MCF 10A (cell line): ENCODE measurements at regions of chr19 and their contacts with region 1.

Region 1: GRCh38 chr19:38658462-38659306 is 11.2 kb downstream of the ACTN4 start:
- DNase-seq: peak; percentile 99
- H3K4me3 Mint-ChIP-seq: peak overlapping the region; percentile 61
- H3K27ac Mint-ChIP-seq: peak overlapping the region; percentile 100
- H3K4me1 Mint-ChIP-seq: peaks cover 46% of the 10 kb centered on the region
- H3K27me3 Mint-ChIP-seq: no peaks in the 10 kb centered on the region
- CTCF ChIP-seq: no peak

Region 2: GRCh38 chr19:38640368-38640767 is 18.3 kb before region 1 on chr19:
- CTCF ChIA-PET with region 1: interaction called, 4 read pairs
- POLR2A ChIA-PET with region 1: interaction called, 11 read pairs
- intact Hi-C with region 1: no loop called
- DNase-seq: peak; percentile 31
- H3K4me3 Mint-ChIP-seq: no peak overlapping the region
- H3K27ac Mint-ChIP-seq: no peak overlapping the region
- H3K4me1 Mint-ChIP-seq: peaks cover 16% of the 10 kb centered on the region
- H3K27me3 Mint-ChIP-seq: no peaks in the 10 kb centered on the region
- CTCF ChIP-seq: no peak

Region 3: DNA sequence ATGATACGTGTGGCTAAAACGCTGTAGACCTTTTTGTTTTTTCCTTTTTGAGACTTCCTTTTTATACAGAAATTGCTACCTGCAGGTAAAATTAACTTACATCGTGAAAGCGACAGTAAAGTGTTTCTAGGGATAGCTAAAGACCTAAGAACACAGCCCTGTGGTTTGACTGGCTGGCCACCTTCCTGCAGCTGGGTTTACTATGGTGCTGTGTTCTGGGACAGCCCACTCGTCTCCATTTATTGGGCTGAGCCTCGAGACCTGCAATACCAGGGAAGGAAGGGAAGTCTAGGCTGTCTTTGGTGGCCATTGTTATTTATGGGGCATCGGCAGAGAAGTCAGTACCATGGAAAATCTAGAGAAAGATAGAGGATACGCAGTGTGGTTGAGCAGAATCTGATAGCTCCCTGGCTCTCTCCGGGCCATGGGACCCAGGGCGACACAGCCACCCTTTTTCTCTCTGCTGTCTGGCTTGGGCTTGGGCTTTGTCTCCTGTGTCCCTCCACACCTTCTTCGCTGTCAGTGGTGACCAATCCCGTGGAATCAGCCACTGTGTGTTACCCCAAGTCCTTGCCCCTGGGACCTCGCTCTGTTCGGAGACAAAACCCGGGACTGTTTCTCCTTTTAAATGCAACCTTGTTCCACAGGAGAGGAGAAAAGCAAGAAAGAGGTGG is 19.7 kb after region 1 on chr19:
- CTCF ChIA-PET with region 1: interaction called, 9 read pairs
- POLR2A ChIA-PET with region 1: interaction called, 521 read pairs
- intact Hi-C with region 1: no loop called
- DNase-seq: no peak
- H3K4me3 Mint-ChIP-seq: no peak overlapping the region
- H3K27ac Mint-ChIP-seq: peak overlapping the region; percentile 60
- H3K4me1 Mint-ChIP-seq: peaks cover 57% of the 10 kb centered on the region
- H3K27me3 Mint-ChIP-seq: no peaks in the 10 kb centered on the region
- CTCF ChIP-seq: no peak

Region 4: GRCh38 chr19:38683393-38684080 is 24.9 kb after region 1 on chr19:
- CTCF ChIA-PET with region 1: interaction called, 17 read pairs
- POLR2A ChIA-PET with region 1: interaction called, 521 read pairs
- intact Hi-C with region 1: loop called (anchors 1 kb)
- DNase-seq: peak; percentile 99
- H3K4me3 Mint-ChIP-seq: peak overlapping the region; percentile 48
- H3K27ac Mint-ChIP-seq: peak overlapping the region; percentile 98
- H3K4me1 Mint-ChIP-seq: peaks cover 68% of the 10 kb centered on the region
- H3K27me3 Mint-ChIP-seq: no peaks in the 10 kb centered on the region
- CTCF ChIP-seq: no peak

Region 5: DNA sequence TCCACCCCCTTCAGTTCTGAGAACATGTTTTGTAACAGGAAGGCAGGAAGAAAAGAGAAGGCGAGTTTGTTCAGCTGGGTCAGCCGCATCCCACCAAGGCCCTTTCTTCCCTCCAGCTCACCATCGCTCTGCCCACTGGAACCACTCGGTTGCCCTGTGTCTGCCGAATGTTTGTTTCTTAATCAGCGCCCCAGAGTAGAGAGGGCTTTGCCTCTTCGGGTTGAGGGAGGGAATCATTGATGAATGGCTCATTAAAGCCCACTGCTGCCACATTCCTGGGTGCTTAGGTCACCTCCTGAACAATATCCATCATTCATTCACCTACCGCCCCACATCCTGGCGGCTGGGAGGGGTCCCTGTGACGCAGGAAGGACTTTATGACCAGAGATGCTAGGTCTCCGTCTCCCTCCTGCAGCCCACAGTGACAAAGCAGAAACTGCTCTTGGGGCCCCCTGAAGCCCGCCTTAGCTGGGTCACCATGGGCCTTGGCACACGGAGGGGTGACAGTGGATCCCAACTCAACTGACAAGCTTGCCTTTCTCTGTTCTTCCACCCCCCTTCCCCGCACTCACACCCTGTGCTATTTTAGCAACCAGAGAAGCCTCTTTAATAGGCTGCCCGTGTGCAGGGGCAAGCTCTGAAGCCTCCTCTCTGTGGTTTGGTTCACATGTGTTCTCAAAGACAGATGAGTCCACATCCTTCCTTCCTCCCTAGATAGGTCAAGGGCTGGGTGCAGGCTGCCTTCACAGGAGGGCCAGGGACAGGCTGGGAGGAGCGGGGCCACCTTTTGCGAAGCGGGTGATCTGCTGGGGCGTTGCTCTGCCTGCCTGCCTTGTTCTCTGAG is 34.9 kb after region 1 on chr19:
- CTCF ChIA-PET with region 1: interaction called, 3 read pairs
- POLR2A ChIA-PET with region 1: interaction called, 521 read pairs
- intact Hi-C with region 1: loop called (anchors 2 kb)
- DNase-seq: peak; percentile 59
- H3K4me3 Mint-ChIP-seq: no peak overlapping the region
- H3K27ac Mint-ChIP-seq: peak overlapping the region; percentile 98
- H3K4me1 Mint-ChIP-seq: peaks cover 53% of the 10 kb centered on the region
- H3K27me3 Mint-ChIP-seq: no peaks in the 10 kb centered on the region
- CTCF ChIP-seq: no peak